Heart left ventricle (tissue), 16 donors: ENCODE measurements at regions of chr14 and their contacts with region 1.

Region 1: DNA sequence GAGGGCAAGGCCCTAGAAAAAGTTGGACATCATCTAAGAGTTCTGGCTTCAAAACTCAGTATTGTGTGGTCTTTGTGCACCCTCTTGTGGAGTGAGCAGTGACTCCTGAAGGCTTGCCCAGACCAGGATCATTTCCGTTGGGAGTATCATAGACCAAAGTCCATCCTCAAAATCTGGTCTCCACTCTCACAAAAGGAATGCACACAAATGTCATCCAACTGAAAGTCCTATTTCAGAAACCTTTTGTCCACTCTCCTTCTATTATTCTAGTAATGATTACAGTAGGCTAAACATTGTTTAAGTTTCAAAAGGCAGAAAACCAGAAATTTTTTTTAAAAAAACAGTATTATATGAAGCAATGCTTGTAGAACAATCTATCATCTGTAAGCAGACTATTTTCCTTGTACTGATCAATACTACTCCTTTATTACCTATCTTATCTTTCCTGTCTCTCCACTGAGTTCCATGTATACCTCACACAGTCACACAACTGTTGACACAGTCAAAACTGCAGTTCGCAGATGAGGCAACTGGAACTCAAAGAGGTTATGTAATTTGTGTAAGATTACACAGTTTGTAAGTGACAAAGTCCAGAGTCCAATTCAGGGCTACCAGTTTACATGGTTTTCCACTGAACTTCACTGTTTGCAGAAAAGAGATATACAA is 41.4 kb downstream of the COX16 start:
- DNase-seq: no peak
- ATAC-seq: peak in 3 of 4 donors; percentile 76 to 85 (median 85)
- H3K4me3 ChIP-seq: no peak overlapping the region
- H3K27ac ChIP-seq: no peak overlapping the region
- H3K4me1 ChIP-seq: no peaks in the 10 kb centered on the region
- H3K27me3 ChIP-seq: no peaks in the 10 kb centered on the region
- CTCF ChIP-seq: peak; percentile 15 to 52 (median 40)
- POLR2A ChIP-seq: no peak

Region 2: GRCh38 chr14:69818757-69819191 is 499.3 kb before region 1 on chr14:
- intact Hi-C with region 1: loop called in 6 of 10 experiments (anchors 2 to 10 kb)
- DNase-seq: peak in 3 of 5 donors; percentile 22 to 45 (median 32)
- ATAC-seq: peak in 3 of 4 donors; percentile 64 to 76 (median 73)
- H3K4me3 ChIP-seq: no peak overlapping the region
- H3K27ac ChIP-seq: no peak overlapping the region
- H3K4me1 ChIP-seq: peaks cover 0 to 4% (median 0%) of the 10 kb centered on the region in 12 donors
- H3K27me3 ChIP-seq: peaks cover 0 to 33% (median 12%) of the 10 kb centered on the region in 9 donors
- CTCF ChIP-seq: peak; percentile 72 to 88 (median 83)
- POLR2A ChIP-seq: no peak

Region 3: GRCh38 chr14:70045844-70046535 is 272.1 kb before region 1 on chr14:
- intact Hi-C with region 1: loop called in 1 of 10 experiments (anchors 5 kb)
- DNase-seq: peak in 4 of 5 donors; percentile 37 to 71 (median 48)
- ATAC-seq: peak in 3 of 4 donors; percentile 80 to 89 (median 89)
- H3K4me3 ChIP-seq: no peak overlapping the region
- H3K27ac ChIP-seq: no peak overlapping the region
- H3K4me1 ChIP-seq: no peaks in the 10 kb centered on the region
- H3K27me3 ChIP-seq: peaks cover 0 to 39% (median 7%) of the 10 kb centered on the region in 9 donors
- CTCF ChIP-seq: peak; percentile 45 to 73 (median 58)
- POLR2A ChIP-seq: no peak

Region 4: GRCh38 chr14:70086685-70087379 is 231.3 kb before region 1 on chr14:
- intact Hi-C with region 1: loop called in 6 of 10 experiments (anchors 5 to 10 kb)
- DNase-seq: no peak
- ATAC-seq: peak in 1 of 4 donors; percentile 38
- H3K4me3 ChIP-seq: no peak overlapping the region
- H3K27ac ChIP-seq: no peak overlapping the region
- H3K4me1 ChIP-seq: no peaks in the 10 kb centered on the region
- H3K27me3 ChIP-seq: peaks cover 0 to 52% (median 1%) of the 10 kb centered on the region in 9 donors
- CTCF ChIP-seq: peak in 10 of 12 donors; percentile 30 to 55 (median 46)
- POLR2A ChIP-seq: no peak

Region 5: DNA sequence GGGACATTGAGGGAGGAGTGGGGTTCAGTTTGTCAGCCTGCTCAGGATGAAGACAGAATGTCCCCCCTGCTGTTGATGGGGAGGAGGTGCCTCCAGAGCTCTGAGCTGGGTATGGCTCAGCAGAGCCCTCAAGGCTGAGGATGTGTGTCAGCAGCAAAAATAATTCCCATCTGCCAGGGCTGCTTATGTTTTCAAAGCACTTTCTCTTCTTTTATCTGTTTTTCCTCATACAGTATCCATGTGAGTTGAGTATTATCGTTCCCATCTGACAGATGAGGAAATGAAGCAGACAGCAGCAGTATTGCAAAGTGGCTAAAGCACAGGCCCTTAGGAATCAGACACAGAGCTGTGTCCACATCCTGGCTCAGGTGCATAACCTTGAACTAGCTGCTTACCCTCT is 223.5 kb before region 1 on chr14:
- intact Hi-C with region 1: loop called in 6 of 10 experiments (anchors 5 to 10 kb)
- DNase-seq: no peak
- ATAC-seq: no peak
- H3K4me3 ChIP-seq: no peak overlapping the region
- H3K27ac ChIP-seq: no peak overlapping the region
- H3K4me1 ChIP-seq: peaks cover 0 to 8% (median 0%) of the 10 kb centered on the region in 12 donors
- H3K27me3 ChIP-seq: peaks cover 0 to 48% (median 14%) of the 10 kb centered on the region in 9 donors
- CTCF ChIP-seq: no peak
- POLR2A ChIP-seq: no peak